Activated T-helper 1 cell treated with anti-CD3 and anti-CD28 coated beads, Interleukin-12 subunit alpha, Interleukin-12 subunit beta, Interleukin-2, Interleukin-4 antibody, amounts not matched to agents 30 ng/mL and 10 ng/mL and 1 ng/mL, durations not matched to agents 14 hours and 24 hours and 36 hours (primary cell): ENCODE measurements at regions of chr18 and their contacts with region 1.

Region 1: DNA sequence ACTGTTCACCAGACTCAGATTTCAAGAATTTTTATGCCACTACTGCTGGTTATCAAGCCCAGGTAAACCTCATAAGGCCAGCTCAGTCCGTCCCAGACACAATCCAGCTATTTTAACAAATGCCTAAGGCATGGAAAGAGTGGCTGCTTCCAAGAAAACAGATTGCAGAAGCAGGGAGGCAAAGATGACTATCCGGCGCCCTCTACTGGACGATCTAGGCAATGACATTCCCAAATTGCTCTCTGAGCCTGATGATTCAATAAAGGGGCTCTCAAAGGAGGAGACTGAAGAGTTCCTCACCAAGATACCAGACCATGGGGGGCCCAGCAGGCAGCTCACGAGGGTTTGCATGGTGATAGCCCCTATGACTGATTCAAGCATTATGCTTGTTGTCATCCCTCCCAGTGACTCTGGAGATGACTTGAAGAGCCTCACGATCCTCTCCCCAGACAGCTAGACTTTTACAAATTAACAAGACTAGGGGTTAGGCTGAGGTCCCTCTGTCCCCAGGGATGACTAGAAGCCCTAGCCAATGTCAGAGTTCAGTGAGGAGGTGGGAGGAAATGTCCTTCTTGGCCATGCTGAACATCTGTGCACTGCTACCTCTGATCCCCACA is 25.0 kb downstream of the SERPINB8 start:
- DNase-seq: peak; percentile 12
- H3K4me3 Mint-ChIP-seq: no peak overlapping the region
- H3K27ac Mint-ChIP-seq: no peak overlapping the region
- H3K4me1 Mint-ChIP-seq: no peaks in the 10 kb centered on the region
- H3K27me3 Mint-ChIP-seq: no peaks in the 10 kb centered on the region

Region 2: GRCh38 chr18:63963615-63964256 is 31.2 kb before region 1 on chr18:
- intact Hi-C with region 1: loop called (anchors 1 kb)
- DNase-seq: peak; percentile 13
- H3K4me3 Mint-ChIP-seq: no peak overlapping the region
- H3K27ac Mint-ChIP-seq: no peak overlapping the region
- H3K4me1 Mint-ChIP-seq: peaks cover 21% of the 10 kb centered on the region
- H3K27me3 Mint-ChIP-seq: no peaks in the 10 kb centered on the region